ENCODE measurements at regions of chr19 and their contacts with region 1.

Region 1: DNA sequence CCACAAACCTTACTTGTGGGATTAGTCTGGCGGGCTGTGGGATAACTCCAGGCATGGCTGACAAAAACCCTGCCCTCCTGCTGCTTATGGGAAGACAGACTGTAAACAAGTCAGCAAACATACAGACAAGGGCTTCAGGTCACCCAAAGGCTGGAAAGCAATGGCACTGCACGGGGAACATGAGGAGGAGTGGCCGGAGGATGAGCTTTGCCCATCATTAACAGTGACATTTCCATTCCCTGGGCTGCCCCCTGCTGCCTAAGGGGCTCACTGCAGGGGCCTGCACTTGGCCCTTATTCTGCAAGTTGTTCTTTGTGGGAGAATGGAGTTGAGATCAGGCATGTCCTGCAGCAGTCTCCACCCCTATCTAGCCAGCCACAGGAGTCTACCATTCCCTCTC is 91.3 kb downstream of the UQCRFS1 start:
- DNase-seq: peak; percentile 70
- ATAC-seq: peak; percentile 90
- H3K4me3 Mint-ChIP-seq: no peak overlapping the region
- H3K27ac Mint-ChIP-seq: no peak overlapping the region
- H3K4me1 Mint-ChIP-seq: no peaks in the 10 kb centered on the region
- H3K27me3 Mint-ChIP-seq: no peaks in the 10 kb centered on the region; the same call in 1 of the 2 replicates
- CTCF ChIP-seq: peak; percentile 65

Region 2: GRCh38 chr19:29014907-29015306 is 106.8 kb before region 1 on chr19:
- CTCF ChIA-PET with region 1: interaction called, 10 read pairs
- POLR2A ChIA-PET with region 1: no interaction called
- DNase-seq: no peak
- ATAC-seq: peak; percentile 66
- H3K4me3 Mint-ChIP-seq: no peak overlapping the region
- H3K27ac Mint-ChIP-seq: no peak overlapping the region
- H3K4me1 Mint-ChIP-seq: peaks cover 19% of the 10 kb centered on the region
- H3K27me3 Mint-ChIP-seq: peaks cover 28% of the 10 kb centered on the region
- CTCF ChIP-seq: no peak

Region 3: DNA sequence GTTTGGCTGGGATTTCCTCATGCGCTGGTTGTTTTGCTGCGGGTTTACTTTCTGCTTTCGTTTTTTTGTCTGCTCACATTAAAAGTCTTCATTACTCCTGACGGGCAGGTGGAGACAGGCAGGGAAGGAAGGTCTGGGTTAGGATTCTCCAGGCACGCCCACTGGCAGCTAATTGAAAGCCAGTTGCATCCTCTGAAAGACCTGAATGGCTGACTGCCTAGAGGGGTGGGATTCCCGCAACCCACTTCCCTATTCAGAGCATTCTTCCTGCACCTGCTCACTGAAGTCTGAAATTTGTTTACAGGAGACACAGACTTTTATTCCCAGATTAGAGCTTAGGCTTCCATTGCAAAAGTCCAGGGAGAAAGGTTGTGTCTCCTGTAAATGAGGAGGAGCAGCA is 80.7 kb before region 1 on chr19:
- CTCF ChIA-PET with region 1: no interaction called
- POLR2A ChIA-PET with region 1: no interaction called
- DNase-seq: peak; percentile 55
- ATAC-seq: peak; percentile 95
- H3K4me3 Mint-ChIP-seq: no peak overlapping the region
- H3K27ac Mint-ChIP-seq: peak overlapping the region; percentile 61
- H3K4me1 Mint-ChIP-seq: peaks cover 49% of the 10 kb centered on the region
- H3K27me3 Mint-ChIP-seq: peaks cover 19% of the 10 kb centered on the region
- CTCF ChIP-seq: no peak

Region 4: DNA sequence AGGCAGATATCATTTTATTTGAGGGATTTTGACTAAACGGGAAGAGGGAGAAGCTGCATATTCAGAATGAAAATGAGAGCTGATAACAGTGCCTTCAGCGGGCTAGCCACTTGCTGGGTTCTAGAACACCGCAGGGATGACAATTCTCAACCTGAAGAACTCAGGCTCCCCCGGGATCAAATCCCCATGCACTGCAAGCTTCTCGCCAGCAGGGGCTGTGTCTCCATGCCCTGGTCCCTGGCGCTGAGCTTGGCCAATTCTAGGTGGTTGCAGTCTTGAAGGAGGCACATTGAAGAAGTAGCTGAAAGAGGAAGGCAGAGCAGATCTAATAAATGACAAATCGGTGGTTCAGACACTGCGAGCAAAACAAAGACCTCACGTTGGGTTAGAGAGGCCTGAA is 37.4 kb before region 1 on chr19:
- CTCF ChIA-PET with region 1: interaction called, 13 read pairs
- POLR2A ChIA-PET with region 1: no interaction called
- DNase-seq: peak; percentile 63
- ATAC-seq: peak; percentile 69
- H3K4me3 Mint-ChIP-seq: no peak overlapping the region
- H3K27ac Mint-ChIP-seq: no peak overlapping the region
- H3K4me1 Mint-ChIP-seq: peaks cover 27% of the 10 kb centered on the region
- H3K27me3 Mint-ChIP-seq: no peaks in the 10 kb centered on the region; the same call in 1 of the 2 replicates
- CTCF ChIP-seq: peak; percentile 31; the same call in 1 of the 2 replicates

Region 5: GRCh38 chr19:29092712-29093552 is 28.8 kb before region 1 on chr19:
- CTCF ChIA-PET with region 1: interaction called, 10 read pairs
- POLR2A ChIA-PET with region 1: no interaction called
- DNase-seq: peak; percentile 33
- ATAC-seq: peak; percentile 26
- H3K4me3 Mint-ChIP-seq: no peak overlapping the region
- H3K27ac Mint-ChIP-seq: no peak overlapping the region
- H3K4me1 Mint-ChIP-seq: peaks cover 21% of the 10 kb centered on the region
- H3K27me3 Mint-ChIP-seq: no peaks in the 10 kb centered on the region
- CTCF ChIP-seq: no peak

Region 6: DNA sequence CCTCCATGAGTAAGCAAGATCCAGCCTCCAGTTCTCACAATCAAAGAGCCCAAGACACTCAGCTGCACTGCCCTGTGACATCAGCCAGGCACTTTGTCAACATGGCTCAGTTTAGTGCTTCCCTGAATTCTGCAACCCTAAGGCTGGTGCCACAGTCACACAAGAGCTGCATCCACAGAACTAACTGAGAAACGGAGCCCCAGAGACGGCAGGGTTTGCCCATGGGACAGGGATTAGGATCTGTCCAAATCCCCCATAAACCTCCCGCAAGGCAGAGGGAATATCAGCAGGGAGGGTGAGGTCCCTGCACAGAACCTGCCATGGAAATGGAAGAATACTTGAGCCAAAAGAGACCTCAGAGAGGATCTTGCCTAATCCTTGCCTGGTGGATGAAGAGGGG is 161.7 kb after region 1 on chr19:
- CTCF ChIA-PET with region 1: no interaction called
- POLR2A ChIA-PET with region 1: no interaction called
- DNase-seq: no peak
- ATAC-seq: no peak
- H3K4me3 Mint-ChIP-seq: no peak overlapping the region
- H3K27ac Mint-ChIP-seq: no peak overlapping the region
- H3K4me1 Mint-ChIP-seq: peaks cover 23% of the 10 kb centered on the region
- H3K27me3 Mint-ChIP-seq: no peaks in the 10 kb centered on the region
- CTCF ChIP-seq: no peak